ENCODE measurements at regions of chr20 and their contacts with region 1.

Region 1: GRCh38 chr20:62386383-62387218 is at the start of gene RPS21:
- DNase-seq: peak; percentile 92 to 98 (median 94)
- ATAC-seq: peak; percentile 92 to 96 (median 94)
- H3K4me3 ChIP-seq: peak within 1 kb of the TSS; percentile 63 to 99 (median 87)
- H3K27ac ChIP-seq: peak within 1 kb of the TSS; percentile 75 to 97 (median 84)
- H3K4me1 ChIP-seq: peaks cover 4 to 17% (median 15%) of the 10 kb centered on the region in 3 donors
- H3K27me3 ChIP-seq: no peaks in the 10 kb centered on the region
- CTCF ChIP-seq: no peak
- total RNA-seq, gene RPS21: 662 to 1,102 (median 850) TPM

Region 2: DNA sequence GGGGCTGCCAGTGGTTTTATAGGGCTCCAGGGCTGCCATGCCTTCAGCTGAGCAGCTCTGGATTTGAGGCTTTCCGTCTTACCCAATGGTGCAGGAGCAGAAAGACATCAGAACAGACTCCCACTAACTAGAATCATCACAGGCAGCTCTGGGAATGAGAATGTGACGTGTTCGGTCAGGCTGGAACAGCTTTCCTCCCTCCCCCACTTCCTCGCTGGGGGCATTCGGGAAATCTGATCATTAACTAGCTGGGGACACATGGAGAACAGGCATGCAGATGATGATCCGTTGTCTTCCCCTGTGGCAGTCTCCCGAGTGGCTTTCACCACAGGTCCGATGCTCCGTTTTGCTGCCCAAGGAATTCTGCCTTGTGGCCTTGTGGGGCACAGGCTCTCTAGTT is 209.3 kb before region 1 on chr20:
- intact Hi-C with region 1: loop called in 1 of 3 experiments (anchors 10 kb)
- DNase-seq: peak in 2 of 6 donors; percentile 1 to 16
- ATAC-seq: no peak
- H3K4me3 ChIP-seq: no peak overlapping the region
- H3K27ac ChIP-seq: no peak overlapping the region
- H3K4me1 ChIP-seq: peaks cover 0 to 6% (median 0%) of the 10 kb centered on the region in 3 donors
- H3K27me3 ChIP-seq: no peaks in the 10 kb centered on the region
- CTCF ChIP-seq: no peak

Region 3: DNA sequence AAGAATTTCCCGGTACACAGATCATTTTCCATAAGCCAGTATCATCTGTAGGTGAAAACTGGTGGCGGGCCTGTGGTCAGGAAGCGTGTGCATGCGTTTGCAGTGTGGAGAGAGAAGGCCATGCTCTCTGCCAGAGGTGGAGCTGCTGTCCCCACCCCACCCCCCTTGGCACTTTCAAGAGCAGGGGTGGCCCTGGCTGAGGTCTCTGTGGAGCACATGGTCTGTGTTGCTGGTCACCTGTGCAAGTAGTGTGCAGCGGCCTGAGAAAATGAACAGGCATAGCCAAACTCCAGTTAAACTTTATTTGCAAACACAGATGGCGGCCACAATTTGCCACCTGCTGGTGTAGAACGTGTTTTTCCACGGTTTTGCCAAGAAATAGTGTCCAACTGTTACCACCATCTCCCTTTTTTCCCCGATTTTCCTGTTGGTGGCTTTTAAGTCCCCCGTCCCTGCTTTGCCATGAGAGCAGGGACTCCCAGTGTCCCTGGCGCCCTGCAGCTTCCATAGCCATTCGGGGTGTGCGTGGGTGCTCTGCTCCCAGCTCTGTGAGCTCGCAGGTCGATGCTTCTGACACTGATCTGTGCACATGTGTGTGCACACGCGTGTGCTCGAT is 81.3 kb before region 1 on chr20:
- intact Hi-C with region 1: loop called in 1 of 3 experiments (anchors 5 kb)
- DNase-seq: peak in 5 of 6 donors; percentile 81 to 91 (median 85)
- ATAC-seq: peak; percentile 25 to 58 (median 44)
- H3K4me3 ChIP-seq: peak overlapping the region in 2 of 4 donors; percentile 85 to 89
- H3K27ac ChIP-seq: peak overlapping the region in 3 of 4 donors; percentile 25 to 46 (median 29)
- H3K4me1 ChIP-seq: peaks cover 8 to 22% (median 11%) of the 10 kb centered on the region in 3 donors
- H3K27me3 ChIP-seq: no peaks in the 10 kb centered on the region
- CTCF ChIP-seq: no peak

Region 4: DNA sequence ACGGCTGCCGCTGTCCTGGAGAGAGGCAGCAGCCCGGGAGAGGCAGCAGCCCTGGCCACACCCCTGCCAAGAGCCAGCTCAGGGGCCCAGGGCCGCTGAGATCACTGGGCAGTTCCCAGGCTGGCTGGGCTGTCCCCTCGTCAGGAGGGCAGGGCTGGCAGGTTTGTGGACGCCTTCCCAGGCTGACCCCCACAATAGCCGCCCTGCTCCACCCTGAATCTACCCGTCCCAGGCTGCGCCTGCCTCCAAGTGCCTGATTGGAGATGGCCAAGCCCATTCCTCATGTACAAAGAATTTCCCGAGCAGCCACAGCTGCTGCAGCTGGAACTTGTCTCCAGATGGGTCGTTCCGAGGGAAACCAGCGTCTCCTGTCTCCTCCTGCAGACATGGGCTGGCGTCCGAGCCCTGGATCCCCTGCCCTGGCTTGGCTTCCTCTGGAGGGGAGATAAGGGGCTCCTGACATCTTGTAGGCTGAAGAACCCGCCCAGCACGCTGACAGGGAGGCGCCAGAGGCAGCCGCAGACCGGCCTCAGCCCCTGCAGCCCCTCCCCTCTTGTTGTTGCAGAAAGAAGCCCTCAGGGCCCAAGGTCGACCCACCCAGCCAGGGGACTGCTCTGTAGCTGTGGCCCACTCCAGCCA is 98.6 kb after region 1 on chr20:
- intact Hi-C with region 1: no loop called
- DNase-seq: peak in 4 of 6 donors; percentile 52 to 79 (median 66)
- ATAC-seq: peak; percentile 38 to 69 (median 58)
- H3K4me3 ChIP-seq: no peak overlapping the region
- H3K27ac ChIP-seq: no peak overlapping the region
- H3K4me1 ChIP-seq: peaks cover 16 to 23% (median 22%) of the 10 kb centered on the region in 3 donors
- H3K27me3 ChIP-seq: no peaks in the 10 kb centered on the region
- CTCF ChIP-seq: no peak

Measured in pancreas (tissue), 10 donors.